H1 (cell line): ENCODE measurements at regions of chr1 and their contacts with region 1.

Region 1: DNA sequence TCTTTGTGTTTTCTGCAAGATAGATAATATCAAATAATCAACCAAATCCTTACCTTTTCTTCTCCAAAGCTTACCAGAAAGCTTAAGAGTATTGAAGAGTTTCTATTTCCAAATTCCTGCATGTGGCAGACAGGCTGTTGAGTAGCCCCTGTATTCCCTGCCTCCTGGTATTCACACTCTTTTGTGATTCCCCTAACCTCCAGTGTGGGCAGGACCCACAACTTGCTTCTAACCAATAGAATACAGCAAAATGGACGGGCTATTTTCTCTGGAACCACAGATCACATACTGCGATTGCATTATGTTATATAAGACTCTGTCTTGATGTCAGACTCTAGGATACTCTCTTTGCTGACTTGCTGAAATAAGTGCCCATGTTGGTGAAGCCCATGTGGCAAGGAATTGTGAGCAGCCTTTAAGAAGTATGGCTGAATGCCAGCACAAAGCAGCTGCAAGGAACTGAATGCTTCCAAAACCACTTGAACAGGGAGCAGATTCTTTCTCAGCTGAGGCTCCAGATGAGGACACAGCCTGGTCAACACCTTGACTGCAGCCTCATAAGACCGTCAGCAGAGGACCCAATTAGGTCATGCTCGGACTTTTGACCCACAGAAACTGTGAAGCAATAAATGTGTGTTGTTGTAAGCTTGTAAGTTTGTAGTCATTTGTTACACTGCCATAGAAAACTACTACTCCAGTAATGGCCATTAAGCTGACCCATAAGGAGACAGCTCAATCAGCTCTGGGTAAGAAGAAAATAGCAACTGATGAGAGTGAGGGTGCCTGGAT is 47.9 kb upstream of the PLXNA2 start:
- DNase-seq: no peak
- H3K4me3 ChIP-seq: no peak overlapping the region
- H3K27ac ChIP-seq: no peak overlapping the region
- H3K4me1 ChIP-seq: peaks cover 0 to 2% (median 0%) of the 10 kb centered on the region in 4 experiments; a peak in 2 of 7 replicates
- H3K27me3 ChIP-seq: no peaks in the 10 kb centered on the region
- CTCF ChIP-seq: no peak
- EP300 ChIP-seq: no peak
- POLR2A ChIP-seq: no peak
- RAD21 ChIP-seq: no peak

Region 2: DNA sequence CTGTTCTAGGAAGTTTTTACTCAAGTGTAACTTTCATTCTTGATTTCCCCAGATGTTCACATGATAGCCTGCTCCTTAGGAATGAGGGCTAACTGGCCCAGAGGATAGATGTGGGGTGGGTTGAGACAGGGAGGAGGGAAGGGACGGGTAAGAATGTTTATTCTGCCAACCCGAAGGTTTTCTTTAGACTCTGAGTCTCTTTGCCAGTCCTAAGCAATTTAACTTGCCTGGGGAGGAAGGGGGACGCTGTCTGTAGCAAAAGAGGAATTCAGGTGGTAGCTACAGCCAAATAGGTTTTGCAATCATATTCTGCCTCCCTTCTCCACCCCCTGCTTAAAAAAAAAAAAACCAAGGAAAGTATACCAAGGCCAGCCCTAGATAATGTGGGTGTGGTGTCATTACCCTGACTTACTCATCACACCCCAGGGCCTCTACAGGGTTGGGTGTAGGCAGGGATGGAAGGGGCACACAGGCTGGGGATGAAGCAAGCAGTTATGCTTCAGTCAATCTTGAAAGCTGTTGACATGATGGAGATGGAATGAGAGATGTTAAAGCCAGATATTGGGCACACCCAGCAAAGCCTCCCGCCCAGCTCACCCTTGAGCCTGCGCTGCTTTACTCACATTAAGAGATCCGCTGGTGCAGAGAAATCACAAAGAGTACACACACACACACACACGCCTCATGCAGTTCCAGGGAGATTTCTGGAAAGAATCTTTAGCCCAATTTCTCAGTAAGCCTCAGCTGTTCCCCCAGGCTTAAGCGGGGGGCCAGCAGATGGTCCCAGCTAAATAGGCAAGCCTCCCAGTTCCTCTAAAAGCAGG is 107.8 kb before region 1 on chr1:
- CTCF ChIA-PET with region 1: no interaction called
- POLR2A ChIA-PET with region 1: no interaction called
- DNase-seq: no peak
- H3K4me3 ChIP-seq: no peak overlapping the region
- H3K27ac ChIP-seq: no peak overlapping the region
- H3K4me1 ChIP-seq: peaks cover 0 to 3% (median 2%) of the 10 kb centered on the region in 4 experiments; a peak in 5 of 7 replicates
- H3K27me3 ChIP-seq: no peaks in the 10 kb centered on the region; a peak in 2 of 7 replicates
- CTCF ChIP-seq: no peak
- EP300 ChIP-seq: no peak
- POLR2A ChIP-seq: no peak
- RAD21 ChIP-seq: no peak

Region 3: DNA sequence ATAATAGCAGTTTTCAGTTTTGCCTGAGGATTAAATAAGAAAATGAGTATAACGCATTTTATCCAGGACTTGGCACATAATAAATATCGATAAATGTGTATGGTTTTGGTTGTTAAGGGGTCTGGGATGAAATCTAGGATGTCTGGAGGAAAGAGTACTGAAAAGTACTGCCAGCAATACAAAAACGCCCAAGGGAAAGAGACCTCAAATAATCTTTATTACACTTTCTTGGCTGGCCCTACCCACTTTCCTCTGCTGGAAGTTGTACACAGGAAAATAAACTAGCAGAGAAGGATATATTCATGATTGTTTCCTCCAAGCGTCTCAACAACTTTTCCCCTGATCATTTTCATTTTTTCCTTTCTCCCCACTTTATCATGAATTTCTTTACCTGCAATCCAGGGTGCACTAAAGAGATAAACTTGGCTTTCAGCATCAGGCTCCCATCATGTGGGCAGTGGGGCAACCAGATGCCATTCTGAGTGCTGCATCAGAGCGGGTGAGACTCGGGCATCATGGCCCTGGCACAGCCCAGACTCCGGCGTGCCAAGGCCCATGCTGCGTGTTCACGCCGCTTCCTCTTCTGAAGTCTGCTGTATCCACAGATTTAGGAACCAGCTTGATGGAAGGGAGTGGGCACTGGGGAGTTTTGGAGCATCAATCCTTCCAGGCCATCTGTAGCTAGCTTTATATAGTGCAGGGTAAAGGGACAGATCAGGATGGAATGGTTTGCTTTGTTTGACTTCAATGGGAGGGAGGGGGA is 12.1 kb before region 1 on chr1:
- CTCF ChIA-PET with region 1: interaction called, 13 read pairs
- POLR2A ChIA-PET with region 1: no interaction called
- DNase-seq: no peak
- H3K4me3 ChIP-seq: no peak overlapping the region
- H3K27ac ChIP-seq: no peak overlapping the region
- H3K4me1 ChIP-seq: peaks cover 0 to 10% (median 4%) of the 10 kb centered on the region in 4 experiments; a peak in 3 of 7 replicates
- H3K27me3 ChIP-seq: no peaks in the 10 kb centered on the region; a peak in 1 of 7 replicates
- CTCF ChIP-seq: no peak
- EP300 ChIP-seq: no peak
- POLR2A ChIP-seq: no peak
- RAD21 ChIP-seq: no peak

Region 4: GRCh38 chr1:208349694-208350330 is 57.7 kb after region 1 on chr1:
- CTCF ChIA-PET with region 1: no interaction called
- POLR2A ChIA-PET with region 1: no interaction called
- DNase-seq: no peak
- H3K4me3 ChIP-seq: no peak overlapping the region
- H3K27ac ChIP-seq: no peak overlapping the region
- H3K4me1 ChIP-seq: no peaks in the 10 kb centered on the region; a peak in 1 of 7 replicates
- H3K27me3 ChIP-seq: no peaks in the 10 kb centered on the region
- CTCF ChIP-seq: no peak
- EP300 ChIP-seq: no peak
- POLR2A ChIP-seq: no peak
- RAD21 ChIP-seq: no peak

Region 5: GRCh38 chr1:208431721-208432120 is 139.6 kb after region 1 on chr1:
- CTCF ChIA-PET with region 1: no interaction called
- POLR2A ChIA-PET with region 1: no interaction called
- DNase-seq: no peak
- H3K4me3 ChIP-seq: no peak overlapping the region
- H3K27ac ChIP-seq: no peak overlapping the region
- H3K4me1 ChIP-seq: peaks cover 2 to 8% (median 4%) of the 10 kb centered on the region in 4 experiments; a peak in 4 of 7 replicates
- H3K27me3 ChIP-seq: no peaks in the 10 kb centered on the region
- CTCF ChIP-seq: no peak
- EP300 ChIP-seq: no peak
- POLR2A ChIP-seq: no peak
- RAD21 ChIP-seq: no peak